Activated CD4-positive, alpha-beta T cell treated with anti-CD3 and anti-CD28 coated beads, Interleukin-2, amount 10 ng/mL, durations not matched to agents 7 days and 5 days (primary cell): ENCODE measurements at regions of chr13 and their contacts with region 1.

Region 1: DNA sequence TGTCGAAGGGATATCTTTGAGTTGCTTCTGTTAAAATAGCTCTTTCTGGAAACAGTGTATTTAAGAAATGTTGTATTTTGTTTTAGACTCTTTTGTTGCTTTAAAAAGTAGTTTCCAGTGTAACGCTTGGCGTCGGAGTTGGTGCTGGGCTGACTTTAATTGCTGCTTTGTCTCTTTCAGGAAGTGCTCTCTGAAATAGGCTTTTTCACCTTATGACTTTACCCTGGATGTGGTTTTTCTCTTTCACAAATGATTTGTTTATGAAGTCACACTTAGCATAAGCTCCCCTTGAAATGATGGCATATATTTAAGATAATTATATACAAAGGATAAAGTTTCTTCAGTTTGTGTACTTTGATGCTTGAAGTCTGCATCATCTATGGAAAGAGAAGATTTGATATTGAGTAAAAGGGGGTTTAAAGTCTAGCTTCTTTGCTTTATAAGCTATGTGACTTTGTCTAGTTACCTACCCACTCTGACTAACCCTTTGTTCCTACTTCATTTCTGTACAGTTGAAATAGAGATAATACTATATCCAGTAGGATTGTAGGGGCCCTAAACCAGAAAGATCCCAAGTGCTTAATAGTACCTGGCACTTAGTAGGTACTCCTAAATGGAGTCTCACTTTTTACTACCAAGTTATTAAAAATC is at the start of gene GPR18:
- DNase-seq: peak; percentile 60
- H3K4me3 Mint-ChIP-seq: peak within 1 kb of the TSS; percentile 87
- H3K27ac Mint-ChIP-seq: peak within 1 kb of the TSS; percentile 91
- H3K4me1 Mint-ChIP-seq: peaks cover 67% of the 10 kb centered on the region
- H3K27me3 Mint-ChIP-seq: no peaks in the 10 kb centered on the region
- total RNA-seq, gene GPR18: 19.7 to 25.4 TPM

Region 2: DNA sequence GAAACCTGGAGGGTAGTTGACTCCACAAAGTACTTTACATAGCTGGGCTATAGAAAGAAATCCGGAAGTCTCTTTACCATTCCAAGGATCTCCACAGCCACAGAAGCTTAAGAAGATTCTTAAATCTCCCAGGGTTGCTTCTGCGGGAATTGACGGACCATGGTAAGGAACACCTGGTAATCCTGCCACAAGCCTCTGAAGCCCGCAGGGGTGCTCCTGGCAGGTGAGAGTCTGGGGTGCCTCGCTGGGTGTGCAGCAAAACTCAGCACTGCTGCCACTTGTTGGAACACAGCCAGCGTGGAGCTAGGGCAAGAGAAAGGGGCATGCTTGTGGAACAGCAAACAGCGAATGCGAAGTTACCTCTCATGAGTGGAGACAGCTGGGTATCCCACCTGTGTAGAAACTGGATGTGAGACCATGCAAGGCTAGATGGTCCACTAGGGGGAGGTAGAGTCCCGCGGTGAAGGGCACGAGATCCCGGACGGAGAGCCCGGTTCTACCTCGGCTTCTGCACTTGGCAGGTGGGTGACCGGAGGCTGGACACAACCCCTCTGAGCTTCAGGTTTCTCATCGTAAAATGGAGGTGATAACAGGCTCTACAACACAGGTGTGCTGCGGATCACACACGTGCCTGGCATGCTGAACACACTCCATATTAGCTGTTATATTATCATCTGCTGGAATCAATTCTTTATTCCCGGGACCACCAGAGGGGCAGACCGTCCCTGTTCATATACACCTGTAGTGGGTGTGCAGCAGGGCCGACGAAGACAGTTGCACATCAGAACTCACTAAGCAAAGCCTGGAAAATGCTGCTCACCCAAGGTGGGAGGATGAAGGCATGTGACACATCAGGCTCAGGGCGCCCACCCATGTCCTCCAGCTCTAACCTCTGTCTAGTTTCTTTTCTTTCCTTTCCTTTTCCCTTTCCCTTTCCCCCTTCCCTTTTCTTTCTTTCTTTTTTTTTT is 81.7 kb before region 1 on chr13:
- CTCF ChIA-PET with region 1: interaction called, 41 read pairs
- POLR2A ChIA-PET with region 1: no interaction called
- DNase-seq: peak; percentile 82
- H3K4me3 Mint-ChIP-seq: no peak overlapping the region
- H3K27ac Mint-ChIP-seq: no peak overlapping the region
- H3K4me1 Mint-ChIP-seq: peaks cover 40% of the 10 kb centered on the region
- H3K27me3 Mint-ChIP-seq: peaks cover 2% of the 10 kb centered on the region